ENCODE measurements at regions of chr22 and their contacts with region 1.

Region 1: DNA sequence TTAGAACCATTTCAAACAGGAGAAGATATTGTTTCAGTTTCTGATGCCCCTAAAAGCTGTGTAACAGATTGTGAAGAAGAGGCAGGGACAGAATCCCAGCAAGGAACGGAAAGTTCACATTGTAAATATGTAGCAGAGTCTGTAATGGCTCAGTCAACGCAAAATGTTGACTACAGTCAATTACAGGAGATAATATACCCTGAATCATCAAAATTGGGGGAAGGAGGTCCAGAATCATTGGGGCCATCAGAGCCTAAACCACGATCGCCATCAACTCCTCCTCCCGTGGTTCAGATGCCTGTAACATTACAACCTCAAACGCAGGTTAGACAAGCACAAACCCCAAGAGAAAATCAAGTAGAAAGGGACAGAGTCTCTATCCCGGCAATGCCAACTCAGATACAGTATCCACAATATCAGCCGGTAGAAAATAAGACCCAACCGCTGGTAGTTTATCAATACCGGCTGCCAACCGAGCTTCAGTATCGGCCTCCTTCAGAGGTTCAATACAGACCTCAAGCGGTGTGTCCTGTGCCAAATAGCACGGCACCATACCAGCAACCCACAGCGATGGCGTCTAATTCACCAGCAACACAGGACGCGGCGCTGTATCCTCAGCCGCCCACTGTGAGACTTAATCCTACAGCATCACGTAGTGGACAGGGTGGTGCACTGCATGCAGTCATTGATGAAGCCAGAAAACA is 40.8 kb downstream of the IGLL1 start:
- DNase-seq: peak; percentile 87
- ATAC-seq: peak; percentile 100
- H3K4me3 Mint-ChIP-seq: no peak overlapping the region
- H3K27ac Mint-ChIP-seq: no peak overlapping the region
- H3K4me1 Mint-ChIP-seq: peaks cover 7% of the 10 kb centered on the region
- H3K27me3 Mint-ChIP-seq: no peaks in the 10 kb centered on the region

Region 2: DNA sequence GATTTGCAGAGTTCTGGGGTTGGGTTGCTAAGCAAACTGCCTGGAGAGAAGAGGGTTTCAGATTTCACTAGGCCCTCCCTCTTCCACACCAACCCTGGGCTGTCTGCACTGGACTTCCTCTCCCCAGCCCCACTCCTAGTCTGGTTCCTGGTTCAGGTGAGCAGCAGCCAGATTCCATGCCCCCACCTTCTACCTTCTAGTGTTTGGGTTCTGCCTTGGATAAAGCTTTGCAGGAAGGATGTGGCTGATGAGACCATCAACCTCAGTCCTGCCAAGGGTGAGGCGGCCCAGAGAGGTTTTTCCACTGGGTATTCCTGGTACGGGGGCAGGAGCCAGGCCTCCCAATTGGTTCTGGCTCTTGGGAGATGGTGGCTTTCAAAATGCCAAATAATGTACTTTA is 290.7 kb before region 1 on chr22:
- CTCF ChIA-PET with region 1: no interaction called
- POLR2A ChIA-PET with region 1: no interaction called
- intact Hi-C with region 1: no loop called
- DNase-seq: no peak
- ATAC-seq: no peak
- H3K4me3 Mint-ChIP-seq: no peak overlapping the region
- H3K27ac Mint-ChIP-seq: no peak overlapping the region
- H3K4me1 Mint-ChIP-seq: peaks cover 78% of the 10 kb centered on the region
- H3K27me3 Mint-ChIP-seq: no peaks in the 10 kb centered on the region

Region 3: DNA sequence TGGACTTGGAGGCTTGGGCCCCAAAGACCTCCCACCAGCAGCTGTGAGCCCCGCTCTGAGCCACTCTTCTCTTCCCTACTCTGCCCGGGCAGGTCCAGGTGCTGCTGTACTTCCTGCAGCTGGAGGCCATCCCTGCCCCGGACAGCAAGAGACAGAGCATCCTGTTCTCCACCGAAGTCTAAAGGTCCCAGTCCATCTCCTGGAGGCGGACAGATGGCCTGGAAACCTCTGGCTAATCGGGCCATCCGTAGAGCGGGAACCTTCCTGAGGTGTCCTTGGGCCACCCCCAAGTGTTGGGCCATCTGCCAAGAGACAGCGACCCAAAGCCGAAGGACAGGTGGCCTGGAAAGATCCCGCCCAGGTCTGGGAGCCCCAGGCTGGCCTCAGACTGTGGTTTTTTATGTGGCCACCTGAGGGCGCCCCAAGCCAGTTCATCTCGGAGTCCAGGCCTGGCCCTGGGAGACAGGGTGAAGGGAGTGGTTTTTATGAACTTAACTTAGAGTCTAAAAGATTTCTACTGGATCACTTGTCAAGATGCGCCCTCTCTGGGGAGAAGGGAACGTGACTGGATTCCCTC is 223.9 kb before region 1 on chr22:
- CTCF ChIA-PET with region 1: no interaction called
- POLR2A ChIA-PET with region 1: no interaction called
- intact Hi-C with region 1: loop called in 1 of 2 experiments (anchors 1 kb)
- DNase-seq: peak; percentile 65
- ATAC-seq: no peak
- H3K4me3 Mint-ChIP-seq: no peak overlapping the region
- H3K27ac Mint-ChIP-seq: no peak overlapping the region
- H3K4me1 Mint-ChIP-seq: no peaks in the 10 kb centered on the region
- H3K27me3 Mint-ChIP-seq: no peaks in the 10 kb centered on the region

Region 4: GRCh38 chr22:23431337-23432072 is 107.8 kb before region 1 on chr22:
- CTCF ChIA-PET with region 1: no interaction called
- POLR2A ChIA-PET with region 1: no interaction called
- intact Hi-C with region 1: loop called in 1 of 2 experiments (anchors 10 kb)
- DNase-seq: no peak
- ATAC-seq: no peak
- H3K4me3 Mint-ChIP-seq: no peak overlapping the region
- H3K27ac Mint-ChIP-seq: no peak overlapping the region
- H3K4me1 Mint-ChIP-seq: peaks cover 10% of the 10 kb centered on the region
- H3K27me3 Mint-ChIP-seq: no peaks in the 10 kb centered on the region

Region 5: GRCh38 chr22:23750714-23751440 is 211.6 kb after region 1 on chr22 and contains the start of gene ZNF70:
- CTCF ChIA-PET with region 1: no interaction called
- POLR2A ChIA-PET with region 1: no interaction called
- intact Hi-C with region 1: loop called in 1 of 2 experiments (anchors 5 kb)
- DNase-seq: peak; percentile 91
- ATAC-seq: peak; percentile 99
- H3K4me3 Mint-ChIP-seq: peak within 1 kb of the TSS; percentile 77
- H3K27ac Mint-ChIP-seq: peak within 1 kb of the TSS; percentile 56
- H3K4me1 Mint-ChIP-seq: peaks cover 11% of the 10 kb centered on the region
- H3K27me3 Mint-ChIP-seq: peaks cover 2% of the 10 kb centered on the region
- total RNA-seq, gene ZNF70: 1.6 to 1.7 TPM

Region 6: GRCh38 chr22:23849009-23850006 is 310.0 kb after region 1 on chr22:
- CTCF ChIA-PET with region 1: no interaction called
- POLR2A ChIA-PET with region 1: no interaction called
- intact Hi-C with region 1: loop called (anchors 5 kb)
- DNase-seq: peak; percentile 93
- ATAC-seq: peak; percentile 96
- H3K4me3 Mint-ChIP-seq: no peak overlapping the region
- H3K27ac Mint-ChIP-seq: no peak overlapping the region
- H3K4me1 Mint-ChIP-seq: no peaks in the 10 kb centered on the region
- H3K27me3 Mint-ChIP-seq: no peaks in the 10 kb centered on the region